ENCODE measurements at regions of chr1 and their contacts with region 1.

Region 1: DNA sequence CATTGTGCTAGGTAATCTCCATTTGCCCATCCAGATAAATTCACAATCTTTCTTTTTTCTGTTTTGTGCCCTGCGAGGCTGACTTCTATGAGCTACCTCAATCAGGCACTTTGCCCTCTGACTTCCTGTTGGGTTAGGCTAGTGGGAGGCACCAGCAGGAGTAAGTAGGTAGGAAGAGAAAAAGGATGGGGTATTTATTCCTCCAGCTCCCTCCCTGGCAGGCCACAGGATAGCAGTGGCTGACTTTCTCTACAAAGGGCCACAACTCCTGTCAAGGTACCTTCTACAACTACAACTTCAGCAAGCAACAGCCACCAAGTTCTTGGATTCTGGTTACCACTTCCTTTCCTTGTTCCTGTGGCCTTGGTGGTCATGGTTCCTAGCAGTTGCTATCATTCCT is 18.8 kb upstream of the GORAB start:
- DNase-seq: no peak
- ATAC-seq: no peak
- H3K4me3 ChIP-seq: no peak overlapping the region
- H3K27ac ChIP-seq: no peak overlapping the region
- H3K4me1 ChIP-seq: no peaks in the 10 kb centered on the region
- H3K27me3 ChIP-seq: no peaks in the 10 kb centered on the region
- CTCF ChIP-seq: no peak
- POLR2A ChIP-seq: no peak

Region 2: GRCh38 chr1:170296642-170297041 is 216.5 kb before region 1 on chr1:
- intact Hi-C with region 1: no loop called
- DNase-seq: no peak
- ATAC-seq: no peak
- H3K4me3 ChIP-seq: no peak overlapping the region
- H3K27ac ChIP-seq: no peak overlapping the region
- H3K4me1 ChIP-seq: no peaks in the 10 kb centered on the region
- H3K27me3 ChIP-seq: no peaks in the 10 kb centered on the region
- CTCF ChIP-seq: no peak
- POLR2A ChIP-seq: no peak

Region 3: DNA sequence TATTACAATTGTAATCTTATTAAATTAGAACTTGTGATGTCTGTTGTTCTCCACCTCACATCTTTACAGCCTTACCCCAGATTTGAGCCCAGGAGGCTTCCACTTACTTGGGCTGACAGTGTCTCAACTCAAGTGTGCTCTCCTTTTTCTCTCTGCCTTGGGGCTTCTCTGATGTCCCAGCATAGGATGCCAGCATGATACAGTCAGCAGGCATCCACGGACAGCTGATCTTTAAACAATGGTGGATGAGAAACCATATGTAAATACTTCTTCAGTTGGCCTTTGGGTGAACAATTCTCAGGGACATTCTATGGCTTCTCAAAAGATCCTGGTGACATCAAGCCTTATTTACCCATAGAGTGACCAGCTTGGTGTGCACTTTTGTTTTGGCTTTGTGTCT is 88.8 kb before region 1 on chr1:
- intact Hi-C with region 1: loop called in 1 of 10 experiments (anchors 10 kb)
- DNase-seq: no peak
- ATAC-seq: no peak
- H3K4me3 ChIP-seq: no peak overlapping the region
- H3K27ac ChIP-seq: no peak overlapping the region
- H3K4me1 ChIP-seq: no peaks in the 10 kb centered on the region
- H3K27me3 ChIP-seq: no peaks in the 10 kb centered on the region
- CTCF ChIP-seq: no peak
- POLR2A ChIP-seq: no peak

Region 4: DNA sequence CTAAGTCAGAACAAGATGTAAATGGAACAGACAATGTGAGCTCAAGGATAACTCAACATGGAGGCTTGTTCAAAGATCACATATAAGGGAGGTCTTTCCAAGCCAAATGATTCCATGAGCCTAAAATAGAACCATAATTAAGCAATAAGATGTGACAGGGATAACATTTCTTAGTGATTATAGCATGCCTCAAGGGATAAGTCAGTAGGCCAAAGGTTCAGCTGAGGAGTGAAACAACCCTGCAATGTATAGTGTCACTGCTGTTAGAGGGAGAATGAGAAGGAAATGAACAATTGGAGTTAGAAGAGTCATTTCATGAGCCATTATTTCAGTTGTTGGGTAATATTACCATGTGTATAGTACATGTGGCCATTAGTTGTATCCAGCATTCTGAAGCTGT is 43.8 kb after region 1 on chr1:
- intact Hi-C with region 1: no loop called
- DNase-seq: no peak
- ATAC-seq: no peak
- H3K4me3 ChIP-seq: no peak overlapping the region
- H3K27ac ChIP-seq: no peak overlapping the region
- H3K4me1 ChIP-seq: peaks cover 0 to under 1% (median 0%) of the 10 kb centered on the region in 12 donors
- H3K27me3 ChIP-seq: no peaks in the 10 kb centered on the region
- CTCF ChIP-seq: no peak
- POLR2A ChIP-seq: no peak

Measured in heart left ventricle (tissue), 16 donors.